Activated CD4-positive, alpha-beta T cell treated with anti-CD3 and anti-CD28 coated beads, Interleukin-2, amount 10 ng/mL, durations not matched to agents 24 days and 14 days (primary cell): ENCODE measurements at regions of chr2 and their contacts with region 1.

Region 1: GRCh38 chr2:25342372-25343186 is 854 bp upstream of the DNMT3A start:
- DNase-seq: peak; percentile 95
- H3K4me3 Mint-ChIP-seq: peak overlapping the region; percentile 87
- H3K27ac Mint-ChIP-seq: peak overlapping the region; percentile 92
- H3K4me1 Mint-ChIP-seq: peaks cover 32% of the 10 kb centered on the region
- H3K27me3 Mint-ChIP-seq: no peaks in the 10 kb centered on the region

Region 2: GRCh38 chr2:25276569-25277465 is 65.8 kb before region 1 on chr2:
- intact Hi-C with region 1: loop called (anchors 5 kb)
- DNase-seq: peak; percentile 94
- H3K4me3 Mint-ChIP-seq: peak overlapping the region; percentile 64
- H3K27ac Mint-ChIP-seq: peak overlapping the region; percentile 90
- H3K4me1 Mint-ChIP-seq: peaks cover 63% of the 10 kb centered on the region
- H3K27me3 Mint-ChIP-seq: no peaks in the 10 kb centered on the region

Region 3: GRCh38 chr2:25314514-25315315 is 27.9 kb before region 1 on chr2:
- intact Hi-C with region 1: loop called (anchors 1 kb)
- DNase-seq: peak; percentile 94
- H3K4me3 Mint-ChIP-seq: peak overlapping the region; percentile 91
- H3K27ac Mint-ChIP-seq: peak overlapping the region; percentile 97
- H3K4me1 Mint-ChIP-seq: peaks cover 44% of the 10 kb centered on the region
- H3K27me3 Mint-ChIP-seq: no peaks in the 10 kb centered on the region

Region 4: DNA sequence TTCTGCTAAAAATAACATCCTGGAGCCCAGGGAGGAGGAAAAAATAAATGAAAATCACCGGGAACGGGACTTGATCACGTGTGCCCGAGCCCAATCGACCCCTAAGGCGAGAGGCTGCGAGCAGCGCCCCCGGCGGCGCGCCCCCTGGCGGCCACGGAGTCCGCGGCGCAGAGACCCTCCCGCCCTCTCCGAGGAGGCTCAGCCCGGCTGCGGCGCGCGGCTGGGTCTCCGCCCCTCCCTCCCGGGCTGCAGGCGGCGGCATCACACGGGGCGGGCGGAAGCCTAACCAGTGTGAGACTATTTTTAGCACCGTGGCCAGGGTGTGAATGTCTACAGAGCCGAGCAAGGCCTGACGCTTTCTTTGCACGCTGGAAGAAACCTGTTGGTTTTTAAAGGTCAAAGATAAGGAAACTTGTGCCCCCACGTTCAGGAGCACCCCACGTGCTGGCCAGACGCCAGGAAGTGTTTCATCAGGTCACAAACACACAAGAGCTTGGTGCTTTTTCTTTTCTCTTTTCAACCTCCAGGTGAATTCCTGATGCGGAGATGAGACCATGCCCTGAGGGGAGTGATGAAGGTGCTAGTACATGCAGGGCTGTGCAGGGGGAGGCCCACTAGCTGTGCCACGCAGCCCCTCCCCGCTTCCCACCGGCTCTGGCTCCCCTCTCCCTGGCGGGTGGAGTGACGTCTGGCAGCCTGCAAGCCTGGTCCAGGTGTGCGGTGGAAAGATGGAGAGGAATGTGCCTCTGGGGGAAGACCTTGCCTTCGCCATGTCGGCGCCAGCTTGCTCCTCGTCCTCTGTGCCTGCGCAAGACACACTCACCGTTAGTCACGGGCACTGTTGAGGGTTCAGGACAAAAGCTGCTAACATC is 34.4 kb after region 1 on chr2:
- intact Hi-C with region 1: loop called (anchors 1 kb)
- DNase-seq: peak; percentile 98
- H3K4me3 Mint-ChIP-seq: peak overlapping the region; percentile 76
- H3K27ac Mint-ChIP-seq: peak overlapping the region; percentile 93
- H3K4me1 Mint-ChIP-seq: peaks cover 30% of the 10 kb centered on the region
- H3K27me3 Mint-ChIP-seq: no peaks in the 10 kb centered on the region

Region 5: DNA sequence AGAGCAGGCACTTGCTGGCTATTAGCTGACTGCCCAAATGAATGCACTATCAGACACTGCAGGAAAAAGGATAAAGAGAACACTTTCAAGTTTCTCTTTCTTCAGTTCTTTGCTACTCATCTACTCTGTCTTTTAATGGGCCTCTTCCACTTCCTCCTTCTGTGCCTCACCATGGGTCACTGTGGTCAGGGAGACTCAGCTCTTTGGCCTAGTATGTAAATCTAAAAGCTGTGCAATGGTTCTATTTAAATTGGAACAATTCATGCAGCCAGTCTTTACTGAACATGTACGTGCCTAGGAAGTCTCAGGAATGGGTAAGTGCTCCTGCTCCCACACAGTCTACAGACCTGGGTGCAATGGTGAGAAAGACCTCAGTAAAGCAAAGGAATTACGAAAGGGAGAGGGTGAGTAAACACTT is 78.2 kb after region 1 on chr2:
- intact Hi-C with region 1: no loop called
- DNase-seq: no peak
- H3K4me3 Mint-ChIP-seq: no peak overlapping the region
- H3K27ac Mint-ChIP-seq: no peak overlapping the region
- H3K4me1 Mint-ChIP-seq: peaks cover 14% of the 10 kb centered on the region
- H3K27me3 Mint-ChIP-seq: no peaks in the 10 kb centered on the region

Region 6: GRCh38 chr2:25567406-25567805 is 224.8 kb after region 1 on chr2:
- intact Hi-C with region 1: loop called (anchors 1 kb)
- DNase-seq: peak; percentile 80
- H3K4me3 Mint-ChIP-seq: no peak overlapping the region
- H3K27ac Mint-ChIP-seq: no peak overlapping the region
- H3K4me1 Mint-ChIP-seq: peaks cover 12% of the 10 kb centered on the region
- H3K27me3 Mint-ChIP-seq: no peaks in the 10 kb centered on the region